IMR-90 (cell line): ENCODE measurements at regions of chr15 and their contacts with region 1.

Region 1: DNA sequence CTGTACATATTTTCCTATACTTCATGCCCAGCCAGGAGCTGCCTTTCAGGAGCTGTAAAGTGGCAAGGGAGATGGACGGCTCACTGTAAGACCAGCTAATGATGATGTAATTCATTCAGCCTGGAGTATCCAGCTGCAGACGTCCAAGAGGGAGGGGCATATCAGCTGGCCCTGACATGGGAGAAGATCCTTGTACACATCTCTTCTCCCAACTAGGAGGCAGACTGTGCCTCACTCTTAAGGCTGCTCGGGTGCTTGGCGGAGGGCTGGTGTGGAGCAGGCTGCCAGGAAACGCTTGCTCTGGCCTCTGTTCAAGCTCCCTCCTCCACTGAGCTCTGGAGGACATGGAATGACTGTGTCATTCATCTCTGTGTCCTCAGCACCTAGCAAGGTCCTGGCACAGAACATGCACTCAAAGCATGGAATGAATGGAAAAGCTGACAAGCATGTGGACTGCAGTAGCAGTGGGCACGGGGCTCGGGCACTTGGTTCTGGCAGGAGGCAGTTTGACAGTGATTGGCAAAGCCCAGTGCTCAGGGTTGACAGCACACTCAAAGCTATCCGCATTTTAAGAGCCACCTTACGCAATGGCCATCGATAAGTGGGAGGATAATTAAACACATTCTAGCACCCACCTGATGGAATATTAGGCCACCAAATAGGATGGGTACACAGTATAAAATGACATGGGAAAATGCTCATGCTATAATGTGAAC is 72.4 kb downstream of the TBC1D2B start:
- DNase-seq: peak; percentile 95
- ATAC-seq: peak; percentile 86
- H3K4me3 ChIP-seq: no peak overlapping the region
- H3K27ac ChIP-seq: no peak overlapping the region
- H3K4me1 ChIP-seq: peaks cover 18% of the 10 kb centered on the region
- H3K27me3 ChIP-seq: no peaks in the 10 kb centered on the region
- CTCF ChIP-seq: peak; percentile 43
- POLR2A ChIP-seq: no peak
- RAD21 ChIP-seq: peak; percentile 50

Region 2: GRCh38 chr15:77921664-77922063 is 83.4 kb before region 1 on chr15:
- CTCF ChIA-PET with region 1: no interaction called
- POLR2A ChIA-PET with region 1: no interaction called
- dilution Hi-C with region 1: no loop called
- in situ Hi-C with region 1: no loop called
- intact Hi-C with region 1: no loop called
- DNase-seq: no peak
- ATAC-seq: no peak
- H3K4me3 ChIP-seq: no peak overlapping the region
- H3K27ac ChIP-seq: no peak overlapping the region
- H3K4me1 ChIP-seq: no peaks in the 10 kb centered on the region
- H3K27me3 ChIP-seq: peaks cover 13% of the 10 kb centered on the region; the same call in 1 of the 2 replicates
- CTCF ChIP-seq: no peak
- POLR2A ChIP-seq: no peak
- RAD21 ChIP-seq: no peak

Region 3: GRCh38 chr15:78072080-78072892 is 67.2 kb after region 1 on chr15:
- CTCF ChIA-PET with region 1: interaction called, 5 read pairs
- POLR2A ChIA-PET with region 1: no interaction called
- dilution Hi-C with region 1: no loop called
- in situ Hi-C with region 1: no loop called
- intact Hi-C with region 1: loop called (anchors 5 kb)
- DNase-seq: peak; percentile 66
- ATAC-seq: peak; percentile 1; the same call in 1 of the 2 replicates
- H3K4me3 ChIP-seq: no peak overlapping the region
- H3K27ac ChIP-seq: peak overlapping the region; percentile 65; the same call in 1 of the 2 replicates
- H3K4me1 ChIP-seq: peaks cover 36% of the 10 kb centered on the region
- H3K27me3 ChIP-seq: no peaks in the 10 kb centered on the region
- CTCF ChIP-seq: no peak
- POLR2A ChIP-seq: no peak
- RAD21 ChIP-seq: no peak

Region 4: GRCh38 chr15:78093242-78094020 is 88.4 kb after region 1 on chr15:
- CTCF ChIA-PET with region 1: no interaction called
- POLR2A ChIA-PET with region 1: no interaction called
- dilution Hi-C with region 1: no loop called
- in situ Hi-C with region 1: no loop called
- intact Hi-C with region 1: loop called (anchors 5 kb)
- DNase-seq: peak; percentile 95
- ATAC-seq: peak; percentile 90
- H3K4me3 ChIP-seq: no peak overlapping the region
- H3K27ac ChIP-seq: peak overlapping the region; percentile 19; the same call in 1 of the 2 replicates
- H3K4me1 ChIP-seq: peaks cover 23% of the 10 kb centered on the region
- H3K27me3 ChIP-seq: peaks cover 28% of the 10 kb centered on the region
- CTCF ChIP-seq: no peak
- POLR2A ChIP-seq: no peak
- RAD21 ChIP-seq: no peak; the same call in 1 of the 2 replicates